Caco-2 (cell line): ENCODE measurements at regions of chr3 and their contacts with region 1.

Region 1: GRCh38 chr3:157159762-157160657 is at the start of gene CCNL1:
- DNase-seq: peak; percentile 94 to 97
- H3K4me3 ChIP-seq: peak within 1 kb of the TSS; percentile 98
- H3K4me3 Mint-ChIP-seq: peak within 1 kb of the TSS; percentile 92
- H3K27ac Mint-ChIP-seq: peak within 1 kb of the TSS; percentile 96
- H3K4me1 ChIP-seq: peaks cover 41% of the 10 kb centered on the region
- H3K4me1 Mint-ChIP-seq: peaks cover 12% of the 10 kb centered on the region
- H3K27me3 ChIP-seq: no peaks in the 10 kb centered on the region
- H3K27me3 Mint-ChIP-seq: no peaks in the 10 kb centered on the region
- CTCF ChIP-seq: no peak
- total RNA-seq, gene CCNL1: 108 and 114 TPM in 2 replicates

Region 2: DNA sequence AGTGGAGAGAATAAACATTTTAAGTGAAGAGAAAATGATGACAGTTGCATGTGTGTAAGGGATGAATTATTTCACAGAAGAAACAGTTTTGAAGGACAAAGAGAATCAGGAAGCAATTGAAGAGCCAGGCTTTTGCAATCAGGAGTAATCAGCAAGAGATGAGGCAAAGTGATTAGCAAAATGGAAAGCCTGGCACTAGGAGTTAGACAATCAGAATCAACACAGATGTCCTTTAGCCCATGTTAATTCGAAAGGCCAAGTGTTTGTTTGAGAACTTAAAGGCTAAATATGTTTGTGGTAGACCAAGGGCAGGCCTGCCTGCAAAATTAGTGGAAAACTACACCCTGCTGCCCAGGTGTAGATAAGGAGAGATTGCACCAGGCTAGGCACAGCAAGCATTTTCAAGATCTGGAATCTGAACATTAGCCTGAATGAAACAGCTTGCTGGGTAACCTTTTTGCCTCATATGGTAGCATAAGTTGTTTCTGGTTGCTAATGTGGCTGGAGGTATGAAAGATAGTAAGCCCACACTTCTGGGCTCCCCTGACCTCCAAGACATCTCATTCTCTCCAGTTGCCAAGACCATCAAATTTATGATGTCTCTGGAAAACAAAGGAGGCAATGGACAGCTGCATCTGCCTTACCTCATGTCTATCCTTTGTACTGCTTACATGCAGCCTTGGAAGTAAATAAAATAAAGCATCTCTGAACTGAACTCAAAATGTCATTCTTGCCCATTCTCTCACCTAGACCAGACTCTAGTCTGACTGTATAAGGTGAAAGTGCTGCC is 355.9 kb before region 1 on chr3:
- CTCF ChIA-PET with region 1: no interaction called
- POLR2A ChIA-PET with region 1: no interaction called
- intact Hi-C with region 1: no loop called
- DNase-seq: no peak
- H3K4me3 ChIP-seq: no peak overlapping the region
- H3K4me3 Mint-ChIP-seq: no peak overlapping the region
- H3K27ac Mint-ChIP-seq: no peak overlapping the region
- H3K4me1 ChIP-seq: 0 out of 2 replicates have a peak, but pooled peaks cover 3% of the 10 kb centered on the region
- H3K4me1 Mint-ChIP-seq: peaks cover 5% of the 10 kb centered on the region
- H3K27me3 ChIP-seq: no peaks in the 10 kb centered on the region
- H3K27me3 Mint-ChIP-seq: no peaks in the 10 kb centered on the region
- CTCF ChIP-seq: no peak

Region 3: DNA sequence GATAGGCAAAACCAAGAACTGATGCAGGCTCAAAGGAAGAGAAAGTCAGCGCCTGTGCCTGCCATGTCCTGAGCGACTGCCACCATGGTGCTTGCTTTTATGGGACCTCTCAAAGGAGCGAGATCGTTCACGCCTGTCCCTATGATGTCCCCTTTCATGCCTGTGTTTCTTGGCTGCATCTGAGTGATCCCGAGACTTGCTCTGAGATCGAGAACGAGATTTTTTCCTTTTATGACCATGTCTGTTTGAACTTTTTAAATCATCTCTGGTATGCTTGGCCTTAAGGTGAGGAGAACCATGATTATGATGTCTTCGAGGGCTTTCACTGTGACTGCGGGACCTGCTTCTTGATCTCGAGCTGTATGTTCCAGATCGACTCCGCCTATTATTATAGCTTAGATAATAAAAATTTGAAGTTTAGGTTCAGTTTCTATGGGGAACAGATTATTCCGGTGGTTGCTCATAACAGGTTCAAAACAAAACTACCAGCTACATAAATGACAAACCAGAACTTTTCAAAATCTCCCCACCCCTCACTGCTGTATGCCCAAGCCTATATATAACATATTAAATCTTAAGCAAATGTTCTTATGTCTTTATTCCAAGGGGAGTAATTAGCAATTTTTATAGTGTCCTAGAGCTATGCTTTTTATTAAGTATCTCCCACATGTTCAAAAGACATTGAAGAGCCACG is 11.7 kb before region 1 on chr3:
- CTCF ChIA-PET with region 1: no interaction called
- POLR2A ChIA-PET with region 1: no interaction called
- intact Hi-C with region 1: no loop called
- DNase-seq: no peak
- H3K4me3 ChIP-seq: no peak overlapping the region
- H3K4me3 Mint-ChIP-seq: no peak overlapping the region
- H3K27ac Mint-ChIP-seq: no peak overlapping the region
- H3K4me1 ChIP-seq: 0 out of 2 replicates have a peak, but pooled peaks cover 4% of the 10 kb centered on the region
- H3K4me1 Mint-ChIP-seq: no peaks in the 10 kb centered on the region
- H3K27me3 ChIP-seq: no peaks in the 10 kb centered on the region
- H3K27me3 Mint-ChIP-seq: no peaks in the 10 kb centered on the region
- CTCF ChIP-seq: no peak

Region 4: DNA sequence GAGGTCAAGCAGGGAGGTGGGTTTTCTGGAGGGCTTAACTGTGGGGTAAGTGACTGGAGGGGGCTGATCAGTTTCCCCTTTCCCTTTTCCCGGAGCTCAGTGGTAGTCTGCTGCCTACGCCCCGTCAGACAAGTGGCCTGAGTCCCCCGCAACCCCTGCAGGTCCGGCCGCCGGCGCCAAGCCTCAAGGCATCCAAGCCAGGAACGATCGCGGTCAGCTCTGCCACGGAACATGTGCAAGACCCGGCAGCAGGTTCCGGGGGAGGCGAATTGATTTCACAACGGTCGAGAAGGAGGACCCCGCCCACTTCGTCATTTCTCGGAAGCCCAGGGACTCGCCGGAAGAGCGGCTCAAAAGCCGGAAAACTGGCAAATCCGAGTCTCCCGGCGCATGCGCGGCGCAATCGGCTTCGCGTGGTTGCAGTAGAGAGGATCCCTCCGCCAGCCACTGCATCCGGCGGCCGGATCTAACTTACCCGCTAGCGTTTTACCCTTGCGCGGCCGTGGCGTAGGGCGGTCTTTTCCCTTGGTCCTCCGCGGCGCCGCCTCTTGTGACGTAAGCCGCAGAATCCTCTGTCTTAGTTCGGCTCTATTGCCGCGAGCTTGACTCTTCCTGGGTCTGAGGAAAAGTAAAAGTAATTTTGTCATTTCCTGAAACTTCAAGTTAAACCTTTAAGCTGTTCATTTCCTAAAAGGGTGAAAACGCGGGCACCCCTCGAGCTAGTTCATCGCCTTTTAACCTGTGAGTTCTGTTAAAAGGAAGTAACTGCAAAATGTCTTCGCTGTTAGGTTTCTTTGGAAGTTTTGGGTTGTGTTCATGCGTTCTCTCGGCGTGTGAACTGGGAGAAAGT is 14.9 kb after region 1 on chr3:
- CTCF ChIA-PET with region 1: interaction called, 12 read pairs
- POLR2A ChIA-PET with region 1: interaction called, 153 read pairs
- intact Hi-C with region 1: loop called (anchors 1 kb)
- DNase-seq: peak; percentile 97 to 99
- H3K4me3 ChIP-seq: peak overlapping the region; percentile 72
- H3K4me3 Mint-ChIP-seq: peak overlapping the region; percentile 80
- H3K27ac Mint-ChIP-seq: peak overlapping the region; percentile 87
- H3K4me1 ChIP-seq: no peaks in the 10 kb centered on the region; the same call in 1 of the 2 replicates
- H3K4me1 Mint-ChIP-seq: peaks cover 7% of the 10 kb centered on the region
- H3K27me3 ChIP-seq: no peaks in the 10 kb centered on the region
- H3K27me3 Mint-ChIP-seq: no peaks in the 10 kb centered on the region
- CTCF ChIP-seq: no peak

Region 5: DNA sequence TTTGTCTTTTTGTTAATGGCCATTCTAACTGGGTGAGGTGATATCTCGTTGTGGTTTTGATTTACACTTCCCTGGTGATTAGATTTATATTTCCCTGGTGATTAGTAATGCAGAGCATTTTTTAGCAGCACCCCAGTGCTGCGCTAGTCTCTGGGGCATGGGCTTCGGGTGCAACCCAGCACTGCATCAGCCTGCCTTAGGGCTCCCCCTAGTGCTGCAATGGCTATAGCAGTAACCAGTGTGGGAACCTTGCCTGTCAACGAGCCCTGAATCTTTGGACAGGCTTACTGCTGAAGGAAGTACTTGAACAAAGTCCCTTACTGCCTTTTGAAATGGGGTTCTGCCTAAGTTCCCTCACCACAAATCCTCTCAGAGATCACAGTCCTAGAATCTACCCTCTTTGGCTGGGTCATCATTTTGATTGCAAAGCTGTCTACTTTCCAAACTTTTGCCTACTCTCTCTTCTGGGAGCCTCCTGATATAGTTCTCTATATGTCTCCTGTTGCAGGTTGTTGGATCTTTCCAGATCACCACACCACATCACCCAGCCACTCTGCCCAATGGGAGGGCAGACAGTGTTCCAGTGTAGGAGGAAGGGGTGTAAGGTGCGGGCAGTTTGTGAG is 79.2 kb after region 1 on chr3:
- CTCF ChIA-PET with region 1: no interaction called
- POLR2A ChIA-PET with region 1: no interaction called
- intact Hi-C with region 1: loop called (anchors 1 kb)
- DNase-seq: peak; percentile 70 to 82
- H3K4me3 ChIP-seq: no peak overlapping the region
- H3K4me3 Mint-ChIP-seq: no peak overlapping the region
- H3K27ac Mint-ChIP-seq: no peak overlapping the region
- H3K4me1 ChIP-seq: no peaks in the 10 kb centered on the region
- H3K4me1 Mint-ChIP-seq: peaks cover 10% of the 10 kb centered on the region
- H3K27me3 ChIP-seq: no peaks in the 10 kb centered on the region; the same call in 1 of the 2 replicates
- H3K27me3 Mint-ChIP-seq: peaks cover 10% of the 10 kb centered on the region
- CTCF ChIP-seq: peak; percentile 86 to 95